CD14-positive monocyte (primary cell): ENCODE measurements at regions of chr15 and their contacts with region 1.

Region 1: GRCh38 chr15:44536962-44537734 is at the start of gene EIF3J:
- DNase-seq: peak; percentile 97 to 98 (median 97)
- H3K4me3 ChIP-seq: peak within 1 kb of the TSS; percentile 86 to 95 (median 90)
- H3K4me3 Mint-ChIP-seq: peak within 1 kb of the TSS; percentile 85 to 93
- H3K27ac ChIP-seq: peak within 1 kb of the TSS; percentile 94 to 96
- H3K27ac Mint-ChIP-seq: peak within 1 kb of the TSS; percentile 93 to 98 (median 96)
- H3K4me1 ChIP-seq: peaks cover 12 to 27% of the 10 kb centered on the region in 2 donors
- H3K4me1 Mint-ChIP-seq: peaks cover 32% of the 10 kb centered on the region
- H3K27me3 ChIP-seq: no peaks in the 10 kb centered on the region
- H3K27me3 Mint-ChIP-seq: no peaks in the 10 kb centered on the region
- CTCF ChIP-seq: no peak
- polyA plus RNA-seq, gene EIF3J: 9.7 to 20.1 (median 13.5) TPM

Region 2: GRCh38 chr15:44482088-44482487 is 55.1 kb before region 1 on chr15:
- intact Hi-C with region 1: no loop called
- DNase-seq: no peak
- H3K4me3 ChIP-seq: no peak overlapping the region
- H3K4me3 Mint-ChIP-seq: no peak overlapping the region
- H3K27ac ChIP-seq: no peak overlapping the region
- H3K27ac Mint-ChIP-seq: peak overlapping the region in 2 of 7 donors; percentile 50 to 62
- H3K4me1 ChIP-seq: no peaks in the 10 kb centered on the region
- H3K4me1 Mint-ChIP-seq: peaks cover 2% of the 10 kb centered on the region
- H3K27me3 ChIP-seq: no peaks in the 10 kb centered on the region
- H3K27me3 Mint-ChIP-seq: peaks cover 0 to 1% (median 0%) of the 10 kb centered on the region in 3 donors
- CTCF ChIP-seq: no peak

Region 3: DNA sequence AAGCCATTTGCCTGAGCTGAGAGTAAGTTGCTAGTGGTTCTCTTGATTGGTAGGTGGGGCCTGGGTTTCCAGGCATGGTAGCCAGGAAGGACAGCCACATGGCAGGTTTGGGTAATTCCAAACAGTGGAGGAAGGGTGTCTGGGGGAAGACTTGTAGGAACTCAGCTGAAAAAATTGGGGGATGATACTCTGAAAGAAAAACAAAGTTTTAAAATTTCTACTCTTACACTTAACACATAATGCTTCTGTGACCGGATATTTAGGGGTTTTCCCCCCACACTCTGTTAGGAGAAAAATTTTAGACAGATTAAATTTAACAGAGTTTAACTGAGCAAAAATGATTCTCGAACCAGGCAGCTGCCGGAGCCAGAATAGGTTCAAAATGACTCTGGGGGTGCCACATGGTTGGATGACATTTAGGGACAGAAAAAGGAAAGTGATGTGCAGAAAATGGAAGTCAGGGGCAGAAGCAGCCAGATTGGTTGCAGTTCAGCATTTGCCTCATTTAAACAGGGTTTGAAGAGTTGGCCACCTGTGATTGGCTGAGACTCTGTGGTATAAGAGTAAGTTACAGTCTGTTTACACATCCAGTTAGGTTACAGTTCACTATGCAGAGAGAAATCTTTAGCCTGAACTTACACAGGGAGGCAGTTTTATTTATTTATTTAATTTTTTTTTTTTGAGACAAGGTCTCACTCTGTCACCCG is 182.3 kb after region 1 on chr15:
- intact Hi-C with region 1: loop called in 1 of 2 experiments (anchors 5 kb)
- DNase-seq: peak; percentile 44 to 60 (median 46)
- H3K4me3 ChIP-seq: no peak overlapping the region
- H3K4me3 Mint-ChIP-seq: no peak overlapping the region
- H3K27ac ChIP-seq: peak overlapping the region; percentile 50 to 66
- H3K27ac Mint-ChIP-seq: peak overlapping the region; percentile 79 to 99 (median 91)
- H3K4me1 ChIP-seq: peaks cover 69 to 90% of the 10 kb centered on the region in 2 donors
- H3K4me1 Mint-ChIP-seq: peaks cover 84% of the 10 kb centered on the region
- H3K27me3 ChIP-seq: no peaks in the 10 kb centered on the region
- H3K27me3 Mint-ChIP-seq: peaks cover 0 to 2% (median 0%) of the 10 kb centered on the region in 3 donors
- CTCF ChIP-seq: no peak